AG04450 (cell line): ENCODE measurements at regions of chr5 and their contacts with region 1.

Region 1: DNA sequence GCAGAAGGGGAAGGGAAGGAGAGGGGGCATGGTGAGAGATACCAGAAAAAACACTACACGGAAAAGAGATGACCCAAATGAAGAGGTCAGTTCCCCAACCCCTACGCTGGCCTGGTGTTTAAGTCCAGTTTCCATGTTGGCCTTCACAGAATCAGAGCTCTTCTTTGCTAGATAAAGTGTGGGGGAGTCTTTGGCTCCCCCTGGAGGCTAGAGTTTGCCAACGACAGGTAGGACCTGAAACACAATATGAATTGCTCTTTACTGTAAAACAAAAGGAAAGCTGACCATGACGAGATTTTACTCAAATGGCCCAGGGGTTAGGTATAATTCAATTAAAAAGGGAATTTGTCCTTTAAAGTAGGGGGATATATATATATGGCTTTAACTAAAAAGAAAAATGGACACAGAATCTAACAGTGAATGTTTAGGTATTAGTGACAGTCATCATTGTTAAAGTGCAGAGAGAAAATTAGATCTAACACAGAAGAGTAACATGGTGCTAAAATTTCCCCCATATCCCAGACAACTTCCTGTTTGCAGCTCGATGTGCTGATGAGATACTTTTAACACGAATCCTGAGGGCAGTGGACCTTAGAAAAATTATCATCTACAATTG is 92.0 kb downstream of the SV2C start:
- DNase-seq: peak; percentile 7
- H3K4me3 ChIP-seq: no peak overlapping the region
- H3K27ac ChIP-seq: no peak overlapping the region
- H3K27me3 ChIP-seq: no peaks in the 10 kb centered on the region
- CTCF ChIP-seq: peak; percentile 84

Region 2: GRCh38 chr5:74927336-74927735 is 1247.8 kb before region 1 on chr5:
- CTCF ChIA-PET with region 1: interaction called, 12 read pairs
- POLR2A ChIA-PET with region 1: no interaction called
- DNase-seq: no peak
- H3K4me3 ChIP-seq: no peak overlapping the region
- H3K27ac ChIP-seq: no peak overlapping the region
- H3K27me3 ChIP-seq: no peaks in the 10 kb centered on the region
- CTCF ChIP-seq: no peak

Region 3: GRCh38 chr5:76145945-76146344 is 29.2 kb before region 1 on chr5:
- CTCF ChIA-PET with region 1: interaction called, 13 read pairs
- POLR2A ChIA-PET with region 1: no interaction called
- DNase-seq: no peak
- H3K4me3 ChIP-seq: no peak overlapping the region
- H3K27ac ChIP-seq: no peak overlapping the region
- H3K27me3 ChIP-seq: no peaks in the 10 kb centered on the region
- CTCF ChIP-seq: peak; percentile 17

Region 4: DNA sequence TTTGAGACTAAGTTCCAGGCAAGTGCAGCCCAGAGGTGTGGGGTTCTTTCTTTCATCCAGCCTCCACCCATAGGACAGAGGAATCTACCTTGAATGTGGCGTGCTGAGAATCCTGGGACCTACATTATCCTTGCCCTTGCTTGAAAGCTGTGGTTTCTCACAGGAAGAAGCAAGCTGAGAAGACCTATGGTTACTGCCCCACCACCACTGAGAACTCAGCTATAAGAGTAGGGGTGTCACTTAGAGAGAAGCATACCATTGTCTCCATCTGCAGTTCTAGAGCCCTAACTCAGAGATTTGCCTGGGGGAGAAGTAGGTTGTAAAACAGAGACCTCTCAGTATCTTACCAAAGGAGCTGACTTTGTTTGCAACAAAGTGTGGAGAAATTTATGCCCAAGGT is 19.6 kb before region 1 on chr5:
- CTCF ChIA-PET with region 1: interaction called, 22 read pairs
- POLR2A ChIA-PET with region 1: no interaction called
- DNase-seq: no peak
- H3K4me3 ChIP-seq: no peak overlapping the region
- H3K27ac ChIP-seq: no peak overlapping the region
- H3K27me3 ChIP-seq: no peaks in the 10 kb centered on the region
- CTCF ChIP-seq: no peak